Thyroid gland (tissue), 4 donors: ENCODE measurements at regions of chr7 and their contacts with region 1.

Region 1: DNA sequence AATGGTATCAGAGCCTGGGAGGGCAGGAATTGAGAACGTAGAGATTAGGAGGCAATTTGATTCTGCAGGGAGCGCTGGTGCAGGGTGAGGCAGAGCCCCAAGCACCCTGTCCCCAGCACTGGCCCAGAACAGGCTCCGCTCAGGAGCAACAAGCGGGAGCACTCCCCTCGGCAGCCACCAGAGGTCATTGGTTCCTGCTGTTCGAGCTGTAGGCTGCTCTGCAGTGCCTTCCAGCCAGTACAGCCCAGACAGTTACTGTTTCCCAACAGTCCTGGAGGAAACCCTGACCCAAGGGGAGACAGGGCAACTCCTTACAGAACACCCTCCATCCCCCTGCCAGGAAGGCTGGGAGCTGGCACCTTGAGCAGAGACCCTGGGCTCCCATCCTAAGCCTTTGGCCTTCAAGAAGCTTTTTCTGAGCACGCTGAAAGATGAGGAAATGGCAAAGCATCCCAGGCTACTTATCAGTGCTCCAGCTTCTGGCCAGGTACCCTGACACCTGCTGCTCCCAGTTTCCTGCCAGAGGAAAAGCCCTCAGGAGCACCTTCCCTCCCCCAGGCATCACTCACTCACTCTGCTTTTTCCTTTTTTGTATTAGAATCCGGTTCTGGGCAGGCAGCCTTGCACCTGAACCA is 71.2 kb upstream of the EFCAB10 start:
- DNase-seq: peak; percentile 84 to 85
- H3K4me3 ChIP-seq: no peak overlapping the region
- H3K27ac ChIP-seq: no peak overlapping the region
- H3K4me1 ChIP-seq: peaks cover 45 to 60% of the 10 kb centered on the region in 2 donors
- H3K27me3 ChIP-seq: no peaks in the 10 kb centered on the region
- CTCF ChIP-seq: peak; percentile 85 to 94 (median 88)
- POLR2A ChIP-seq: no peak

Region 2: DNA sequence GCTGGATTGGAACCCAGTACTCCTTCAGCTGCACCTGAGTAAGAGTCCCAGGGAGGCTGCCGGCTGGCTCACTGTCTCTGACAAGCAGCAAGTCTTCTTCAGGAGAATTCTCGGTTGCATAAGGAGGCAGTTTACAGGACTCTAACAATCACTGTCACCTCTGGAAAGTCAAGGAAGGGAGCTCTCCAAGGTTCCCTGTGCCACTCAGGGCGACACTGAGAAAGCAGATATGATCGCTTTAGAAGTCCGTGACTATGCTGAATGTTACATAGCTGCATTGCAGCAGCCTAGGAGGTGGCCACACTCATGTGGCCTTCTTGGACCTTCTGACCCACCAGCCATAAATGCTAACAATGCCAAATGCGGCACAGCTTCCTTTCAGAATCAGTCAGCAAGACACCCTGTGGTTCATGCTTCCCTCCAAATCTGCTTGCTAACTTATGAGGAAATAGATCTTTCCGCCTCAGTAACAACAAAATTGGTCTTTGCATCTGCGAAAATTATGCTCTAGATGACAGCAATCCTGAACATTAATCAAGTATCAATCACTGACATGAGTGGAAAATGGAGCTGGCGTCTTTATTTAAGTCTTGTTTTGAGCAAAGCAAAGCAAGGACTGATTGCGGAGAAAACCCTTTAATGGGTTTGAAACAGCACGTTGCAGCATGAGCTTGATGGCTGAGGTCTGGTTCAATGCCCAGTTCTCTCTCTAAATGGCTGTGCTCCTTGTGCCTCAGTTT is 91.0 kb after region 1 on chr7:
- intact Hi-C with region 1: loop called (anchors 10 kb)
- DNase-seq: no peak
- H3K4me3 ChIP-seq: no peak overlapping the region
- H3K27ac ChIP-seq: no peak overlapping the region
- H3K4me1 ChIP-seq: peaks cover 2 to 4% of the 10 kb centered on the region in 2 donors
- H3K27me3 ChIP-seq: no peaks in the 10 kb centered on the region
- CTCF ChIP-seq: no peak
- POLR2A ChIP-seq: no peak

Region 3: DNA sequence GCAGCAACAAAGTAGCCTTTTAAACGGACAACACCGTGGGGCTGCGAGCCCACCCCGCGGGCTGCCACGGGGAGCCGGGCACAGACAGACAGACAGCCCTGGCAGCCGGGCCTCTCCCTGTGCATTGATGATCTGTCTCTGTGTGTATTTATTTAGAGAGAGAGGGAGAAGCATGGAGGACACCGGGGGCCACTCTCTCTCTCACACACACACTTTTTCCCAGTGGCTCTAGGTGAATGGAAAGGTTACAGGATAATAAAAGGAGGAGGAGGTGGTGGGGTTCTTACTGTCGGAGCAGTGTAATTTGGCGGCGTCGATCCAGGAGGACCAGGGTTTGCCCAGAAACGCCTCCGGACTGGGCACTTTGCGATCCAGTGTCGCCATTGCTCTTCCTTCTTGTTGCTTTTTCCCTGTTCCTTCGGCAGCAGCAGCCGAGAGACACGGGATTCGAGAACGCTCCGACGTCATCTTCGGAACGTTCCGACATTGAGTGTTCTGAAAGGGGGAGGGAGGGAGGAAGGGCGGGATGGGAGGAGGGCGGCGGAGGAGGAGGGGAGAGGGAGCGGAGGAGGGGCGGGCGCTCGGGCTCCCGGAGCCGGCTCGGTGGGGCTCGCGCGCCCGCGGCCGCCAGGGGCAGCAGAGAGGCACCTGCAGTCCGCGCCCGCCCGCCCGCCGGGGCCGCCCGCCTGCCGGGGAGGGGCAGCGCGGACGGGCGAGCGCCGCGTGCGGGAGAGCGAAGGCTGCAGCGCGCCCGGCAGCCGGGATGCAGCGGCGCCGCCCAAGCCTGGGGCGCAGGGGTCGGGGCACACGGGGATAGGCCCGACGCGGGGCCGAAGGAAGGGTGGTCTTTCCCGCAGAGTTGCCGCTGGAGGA is 223.9 kb after region 1 on chr7 and contains the start of gene ATXN7L1:
- intact Hi-C with region 1: loop called (anchors 10 kb)
- DNase-seq: peak; percentile 96
- H3K4me3 ChIP-seq: peak within 1 kb of the TSS; percentile 17 to 70 (median 48)
- H3K27ac ChIP-seq: peak within 1 kb of the TSS; percentile 83 to 92 (median 87)
- H3K4me1 ChIP-seq: peaks cover 23 to 27% of the 10 kb centered on the region in 2 donors
- H3K27me3 ChIP-seq: no peaks in the 10 kb centered on the region
- CTCF ChIP-seq: peak in 3 of 6 experiments; percentile 89 to 98 (median 92)
- POLR2A ChIP-seq: peak in 1 of 2 donors; percentile 89
- total RNA-seq, gene ATXN7L1: 21.8 to 24.4 (median 22.8) TPM

Region 4: GRCh38 chr7:106009403-106010226 is 357.1 kb after region 1 on chr7:
- intact Hi-C with region 1: loop called (anchors 10 kb)
- DNase-seq: peak; percentile 84 to 85
- H3K4me3 ChIP-seq: no peak overlapping the region
- H3K27ac ChIP-seq: no peak overlapping the region
- H3K4me1 ChIP-seq: peaks cover 16 to 17% of the 10 kb centered on the region in 2 donors
- H3K27me3 ChIP-seq: no peaks in the 10 kb centered on the region
- CTCF ChIP-seq: peak; percentile 72 to 94 (median 91)
- POLR2A ChIP-seq: no peak

Region 5: GRCh38 chr7:106041140-106041717 is 388.8 kb after region 1 on chr7:
- intact Hi-C with region 1: loop called (anchors 5 kb)
- DNase-seq: peak; percentile 62 to 63
- H3K4me3 ChIP-seq: no peak overlapping the region
- H3K27ac ChIP-seq: no peak overlapping the region
- H3K4me1 ChIP-seq: peaks cover 4 to 8% of the 10 kb centered on the region in 2 donors
- H3K27me3 ChIP-seq: no peaks in the 10 kb centered on the region
- CTCF ChIP-seq: peak; percentile 56 to 86 (median 72)
- POLR2A ChIP-seq: no peak